GM13976 (cell line): ENCODE measurements at regions of chr3 and their contacts with region 1.

Region 1: DNA sequence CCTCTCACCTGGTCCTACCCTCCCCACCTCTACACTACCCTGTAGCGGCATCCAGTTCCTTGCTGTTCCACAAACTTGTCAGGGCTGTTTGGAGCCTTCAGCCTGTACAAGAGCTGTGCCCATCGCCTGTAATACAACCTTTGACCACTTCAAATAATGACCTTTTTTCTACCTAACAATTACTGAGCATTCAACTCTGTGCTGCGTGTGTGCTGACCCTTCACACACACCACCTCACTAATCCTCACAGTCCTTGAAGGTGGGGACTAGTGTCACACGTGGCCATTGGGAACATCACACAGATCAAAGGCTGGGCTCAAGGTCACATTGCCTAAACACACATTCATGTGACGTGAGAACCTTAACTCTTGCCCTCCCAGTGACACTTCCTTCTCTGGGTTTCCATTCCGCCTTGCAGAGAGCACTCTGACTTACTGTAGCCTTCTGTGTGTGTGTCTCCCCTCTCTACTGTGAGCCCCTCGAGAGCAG is 3.1 kb downstream of the C3orf20 start:
- DNase-seq: no peak
- CTCF ChIP-seq: no peak

Region 2: DNA sequence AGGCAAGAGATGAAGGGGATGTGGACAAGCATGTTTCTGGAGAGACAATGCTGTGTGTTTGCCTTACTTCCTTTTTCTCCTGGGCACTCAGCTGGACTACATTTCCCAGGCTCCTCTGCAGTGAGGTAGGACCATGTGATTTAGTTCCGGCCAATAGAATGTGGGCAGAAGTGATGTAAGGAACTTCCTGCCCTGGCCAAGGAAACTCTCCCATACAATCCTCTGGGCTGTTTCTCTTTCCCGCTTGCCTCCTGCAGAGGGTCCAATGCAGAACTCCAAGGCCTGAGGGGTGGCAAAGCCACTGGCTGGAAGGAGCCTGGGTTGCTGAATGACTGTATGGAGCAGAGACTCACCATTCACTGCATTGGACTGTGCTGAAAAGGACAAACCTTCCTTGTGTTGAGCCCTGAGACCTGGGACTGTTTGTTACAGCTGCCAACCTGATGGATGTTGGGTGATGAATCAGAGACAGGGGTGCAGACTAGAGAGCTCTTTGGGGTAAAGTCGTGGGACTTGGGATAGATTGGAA is 358.3 kb before region 1 on chr3:
- in situ Hi-C with region 1: no loop called
- DNase-seq: peak; percentile 82
- CTCF ChIP-seq: no peak

Region 3: GRCh38 chr3:14418296-14419250 is 259.5 kb before region 1 on chr3:
- in situ Hi-C with region 1: no loop called
- DNase-seq: no peak
- CTCF ChIP-seq: no peak

Region 4: GRCh38 chr3:14780927-14781507 is 103.0 kb after region 1 on chr3:
- in situ Hi-C with region 1: loop called (anchors 10 kb)
- DNase-seq: peak; percentile 82
- CTCF ChIP-seq: peak; percentile 79